ENCODE measurements at regions of chr20 and their contacts with region 1.

Region 1: DNA sequence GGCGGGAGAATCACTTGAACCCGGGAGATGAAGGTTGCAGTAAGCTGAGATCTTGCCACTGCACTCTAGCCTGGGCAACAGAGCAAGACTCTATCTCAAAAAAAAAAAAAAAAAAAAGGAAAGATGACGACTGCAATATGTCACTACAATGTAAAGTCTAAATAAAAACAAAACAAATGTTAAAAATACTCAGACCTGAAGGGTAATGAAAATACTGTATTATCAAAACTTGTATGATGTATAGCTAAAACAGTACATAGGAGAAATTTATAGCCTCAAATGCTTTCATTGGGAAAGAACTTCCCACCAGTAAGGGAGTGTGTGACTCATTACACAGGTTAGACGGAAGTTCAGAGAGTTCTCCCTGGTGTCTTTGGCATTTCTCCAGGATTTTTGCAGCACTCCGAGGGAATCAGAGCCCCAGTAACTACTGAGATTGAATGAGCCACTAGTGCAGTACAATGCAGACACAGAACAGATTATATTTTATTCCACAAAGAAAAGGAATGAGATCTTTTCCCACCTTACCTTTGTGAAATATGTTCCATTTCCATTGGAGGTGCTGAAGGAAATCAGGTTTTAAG is 12.5 kb upstream of the RALGAPB start:
- DNase-seq: peak in 1 of 2 experiments; percentile 47
- H3K4me3 ChIP-seq: no peak overlapping the region; the same call in 1 of the 2 replicates
- H3K4me3 Mint-ChIP-seq: peak overlapping the region; percentile 20
- H3K27ac Mint-ChIP-seq: peak overlapping the region; percentile 48
- H3K4me1 ChIP-seq: peaks cover 6% of the 10 kb centered on the region
- H3K4me1 Mint-ChIP-seq: peaks cover 9% of the 10 kb centered on the region
- H3K27me3 ChIP-seq: no peaks in the 10 kb centered on the region
- H3K27me3 Mint-ChIP-seq: peaks cover 4% of the 10 kb centered on the region
- CTCF ChIP-seq: no peak

Region 2: DNA sequence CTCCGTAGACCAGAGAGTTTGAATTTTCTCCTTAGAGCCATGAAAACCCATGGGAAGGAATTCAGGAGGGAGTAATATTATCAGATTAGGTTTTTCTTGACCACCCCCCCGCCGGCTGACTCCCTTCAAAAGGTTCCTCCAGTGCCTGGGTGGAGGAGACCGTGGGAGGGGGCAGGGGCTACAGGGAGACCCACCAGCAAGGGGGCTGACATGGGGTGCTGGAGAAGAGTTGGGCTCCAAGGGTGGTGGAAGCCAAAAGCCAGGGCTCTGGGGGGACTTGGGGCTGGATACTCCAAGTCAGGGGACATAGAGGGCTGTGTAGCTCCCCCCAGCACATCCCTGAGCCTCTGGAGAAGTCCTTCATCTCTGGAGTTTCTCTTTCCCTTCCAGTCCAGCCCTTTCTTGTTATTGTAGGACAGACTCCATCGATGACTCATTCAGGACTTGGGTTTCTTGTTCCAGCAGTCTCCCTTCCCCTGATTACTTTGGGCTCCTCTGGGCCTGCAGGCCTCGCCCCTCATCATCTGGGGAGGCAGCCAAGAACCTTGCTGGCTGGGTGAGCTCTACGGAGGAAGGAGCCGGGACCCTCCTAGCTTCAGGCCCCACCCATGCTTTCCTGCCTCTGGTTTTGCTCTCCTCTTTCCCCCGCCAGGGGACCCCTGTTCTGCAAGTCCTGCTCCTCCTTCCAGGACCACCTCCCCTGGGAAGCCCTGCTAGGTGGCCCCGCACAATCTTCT is 189.1 kb before region 1 on chr20:
- CTCF ChIA-PET with region 1: no interaction called
- POLR2A ChIA-PET with region 1: no interaction called
- intact Hi-C with region 1: no loop called
- DNase-seq: no peak
- H3K4me3 ChIP-seq: no peak overlapping the region
- H3K4me3 Mint-ChIP-seq: no peak overlapping the region
- H3K27ac Mint-ChIP-seq: no peak overlapping the region
- H3K4me1 ChIP-seq: no peaks in the 10 kb centered on the region
- H3K4me1 Mint-ChIP-seq: no peaks in the 10 kb centered on the region
- H3K27me3 ChIP-seq: no peaks in the 10 kb centered on the region
- H3K27me3 Mint-ChIP-seq: peaks cover 9% of the 10 kb centered on the region
- CTCF ChIP-seq: no peak

Region 3: DNA sequence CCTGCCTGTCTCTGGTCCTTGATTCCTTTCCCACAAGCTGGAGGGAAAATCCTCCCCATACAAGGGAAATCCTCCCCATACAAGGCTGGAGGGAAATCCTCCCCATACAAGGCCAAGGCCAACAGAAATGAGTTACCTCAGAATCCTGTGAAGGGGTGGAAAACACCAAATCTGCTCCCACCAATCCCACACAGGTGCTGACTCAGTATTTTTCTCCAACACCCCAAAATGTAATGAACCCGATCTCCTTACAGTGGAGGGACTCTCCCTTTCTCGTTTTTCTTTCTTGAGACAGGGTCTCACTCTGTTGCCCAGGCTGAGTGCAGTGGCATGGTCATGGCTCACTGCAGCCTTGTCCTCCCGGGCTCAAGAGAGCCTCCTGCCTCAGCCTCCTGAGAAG is 31.3 kb before region 1 on chr20:
- CTCF ChIA-PET with region 1: interaction called, 11 read pairs
- POLR2A ChIA-PET with region 1: no interaction called
- intact Hi-C with region 1: no loop called
- DNase-seq: no peak
- H3K4me3 ChIP-seq: no peak overlapping the region
- H3K4me3 Mint-ChIP-seq: no peak overlapping the region
- H3K27ac Mint-ChIP-seq: no peak overlapping the region
- H3K4me1 ChIP-seq: peaks cover 9% of the 10 kb centered on the region
- H3K4me1 Mint-ChIP-seq: peaks cover 44% of the 10 kb centered on the region
- H3K27me3 ChIP-seq: no peaks in the 10 kb centered on the region
- H3K27me3 Mint-ChIP-seq: no peaks in the 10 kb centered on the region
- CTCF ChIP-seq: no peak

Measured in Caco-2 (cell line).